Gastrocnemius medialis (tissue), 4 donors: ENCODE measurements at regions of chr1 and their contacts with region 1.

Region 1: GRCh38 chr1:170729225-170730002 is 65.5 kb downstream of the PRRX1 start:
- DNase-seq: peak; percentile 87 to 89
- ATAC-seq: peak; percentile 91 to 92
- H3K4me3 ChIP-seq: peak overlapping the region; percentile 21 to 37 (median 30)
- H3K27ac ChIP-seq: peak overlapping the region; percentile 85 to 95 (median 90)
- H3K4me1 ChIP-seq: peaks cover 63 to 69% of the 10 kb centered on the region in 2 donors
- H3K27me3 ChIP-seq: no peaks in the 10 kb centered on the region
- CTCF ChIP-seq: no peak
- POLR2A ChIP-seq: peak; percentile 25 to 65

Region 2: DNA sequence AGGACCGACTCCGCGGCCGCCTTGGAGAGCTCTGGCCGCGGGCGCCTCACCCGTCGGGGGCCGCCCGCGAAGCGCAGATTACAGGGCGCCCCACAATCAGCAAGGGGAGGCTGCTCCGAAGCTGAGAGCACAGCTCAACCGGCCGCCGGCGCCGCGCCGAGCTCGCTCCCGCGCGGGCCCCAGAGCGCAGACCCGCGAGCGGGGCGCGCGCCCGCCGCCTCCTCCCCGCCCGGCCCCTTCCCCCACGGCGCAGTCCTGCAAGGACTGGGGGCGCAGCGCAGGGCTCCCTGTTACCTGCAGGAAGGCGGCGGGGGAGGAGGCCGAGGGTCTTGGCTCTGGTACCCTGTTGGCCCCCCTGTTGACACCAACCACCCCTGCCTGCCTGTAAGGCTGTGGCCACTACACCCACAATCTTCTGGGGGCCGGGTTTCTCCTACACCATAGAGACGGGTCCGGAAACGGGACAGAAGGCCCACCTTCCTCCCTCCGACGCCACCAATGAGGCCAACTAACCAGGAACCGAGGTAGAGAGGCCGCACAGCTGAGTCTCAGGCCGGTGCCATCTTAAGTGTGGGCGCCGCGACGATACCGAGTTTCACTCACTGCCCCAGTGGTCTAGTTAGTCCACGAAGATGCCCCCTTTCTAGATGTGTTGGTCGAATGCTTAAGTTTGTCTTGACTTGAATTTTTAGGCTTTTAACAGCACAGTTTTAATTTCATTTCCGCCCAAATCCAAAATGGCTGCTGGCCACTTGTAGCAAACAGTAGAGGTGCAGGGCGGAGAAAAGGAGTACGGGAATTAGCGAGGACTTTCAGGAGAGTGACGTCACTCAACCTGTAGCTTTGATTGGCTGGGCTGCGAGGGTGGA is 835.7 kb before region 1 on chr1 and contains the start of gene SCYL3:
- in situ Hi-C with region 1: no loop called
- intact Hi-C with region 1: loop called (anchors 5 kb)
- DNase-seq: peak; percentile 94
- ATAC-seq: peak; percentile 98 to 99
- H3K4me3 ChIP-seq: peak within 1 kb of the TSS; percentile 74 to 99 (median 96)
- H3K27ac ChIP-seq: peak within 1 kb of the TSS; percentile 87 to 98 (median 94)
- H3K4me1 ChIP-seq: peaks cover 11 to 24% of the 10 kb centered on the region in 2 donors
- H3K27me3 ChIP-seq: peaks cover 0 to 3% (median 0%) of the 10 kb centered on the region in 3 donors
- CTCF ChIP-seq: no peak
- POLR2A ChIP-seq: peak; percentile 48 to 63
- total RNA-seq, gene SCYL3: 6.2 to 14.3 (median 12.8) TPM

Region 3: GRCh38 chr1:170696591-170697290 is 32.7 kb before region 1 on chr1:
- in situ Hi-C with region 1: no loop called
- intact Hi-C with region 1: loop called (anchors 2 kb)
- DNase-seq: no peak
- ATAC-seq: no peak
- H3K4me3 ChIP-seq: no peak overlapping the region
- H3K27ac ChIP-seq: peak overlapping the region; percentile 73 to 95 (median 86)
- H3K4me1 ChIP-seq: peaks cover 87 to 92% of the 10 kb centered on the region in 2 donors
- H3K27me3 ChIP-seq: no peaks in the 10 kb centered on the region
- CTCF ChIP-seq: no peak
- POLR2A ChIP-seq: no peak